Naive thymus-derived CD4-positive, alpha-beta T cell (primary cell): ENCODE measurements at regions of chr14 and their contacts with region 1.

Region 1: GRCh38 chr14:31592631-31593030 is 31.4 kb downstream of the NUBPL start:
- DNase-seq: no peak
- ATAC-seq: no peak
- H3K4me3 ChIP-seq: no peak overlapping the region
- H3K4me3 Mint-ChIP-seq: no peak overlapping the region
- H3K27ac ChIP-seq: no peak overlapping the region
- H3K27ac Mint-ChIP-seq: no peak overlapping the region
- H3K4me1 ChIP-seq: no peaks in the 10 kb centered on the region
- H3K4me1 Mint-ChIP-seq: peaks cover 0 to 12% (median 3%) of the 10 kb centered on the region in 7 donors
- H3K27me3 ChIP-seq: no peaks in the 10 kb centered on the region
- H3K27me3 Mint-ChIP-seq: no peaks in the 10 kb centered on the region

Region 2: DNA sequence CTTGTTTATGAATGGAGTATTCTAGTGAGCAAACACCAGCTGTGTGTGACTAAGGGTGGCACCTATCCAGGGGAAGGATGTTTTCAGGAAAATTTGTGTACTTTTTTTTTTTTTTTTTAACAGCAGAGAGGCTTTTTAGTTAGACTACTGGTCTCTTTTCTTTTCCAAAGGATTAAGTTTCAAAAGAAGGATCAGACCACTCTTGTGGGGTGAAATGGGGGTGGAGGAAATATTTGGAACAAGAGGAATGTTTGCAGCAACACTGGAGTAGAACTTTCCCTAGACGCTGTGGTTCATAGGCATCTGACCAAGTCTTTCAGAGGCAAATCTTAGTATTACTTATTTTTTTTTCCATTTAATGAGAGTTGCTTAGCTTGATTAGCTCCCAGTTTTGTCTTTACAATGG is 10.3 kb before region 1 on chr14:
- CTCF ChIA-PET with region 1: no interaction called
- POLR2A ChIA-PET with region 1: no interaction called
- intact Hi-C with region 1: loop called in 1 of 2 experiments (anchors 1 kb)
- DNase-seq: no peak
- ATAC-seq: no peak
- H3K4me3 ChIP-seq: no peak overlapping the region
- H3K4me3 Mint-ChIP-seq: no peak overlapping the region
- H3K27ac ChIP-seq: no peak overlapping the region
- H3K27ac Mint-ChIP-seq: no peak overlapping the region
- H3K4me1 ChIP-seq: no peaks in the 10 kb centered on the region
- H3K4me1 Mint-ChIP-seq: peaks cover 2 to 21% (median 6%) of the 10 kb centered on the region in 7 donors
- H3K27me3 ChIP-seq: no peaks in the 10 kb centered on the region
- H3K27me3 Mint-ChIP-seq: no peaks in the 10 kb centered on the region

Region 3: DNA sequence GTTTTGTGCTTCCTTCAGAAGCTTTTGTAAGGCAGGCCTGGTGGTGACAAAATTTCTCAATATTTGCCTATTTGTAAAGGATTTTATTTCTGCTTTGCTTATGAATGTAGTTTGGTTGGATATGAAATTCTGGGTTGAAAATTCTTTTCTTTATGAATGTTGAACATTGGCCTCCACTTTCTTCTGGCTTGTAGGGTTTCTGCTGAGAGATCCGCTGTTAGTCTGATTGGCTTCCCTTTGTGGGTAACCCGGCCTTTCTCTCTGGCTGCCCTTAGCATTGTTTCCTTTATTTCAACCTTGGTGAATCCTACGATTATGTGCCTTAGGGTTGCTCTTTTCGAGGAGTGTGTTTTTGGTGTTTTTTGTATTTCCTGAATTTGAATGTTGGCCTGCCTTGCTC is 26.8 kb after region 1 on chr14:
- CTCF ChIA-PET with region 1: no interaction called
- POLR2A ChIA-PET with region 1: no interaction called
- intact Hi-C with region 1: no loop called
- DNase-seq: no peak
- ATAC-seq: no peak
- H3K4me3 ChIP-seq: no peak overlapping the region
- H3K4me3 Mint-ChIP-seq: peak overlapping the region in 1 of 10 donors; percentile 18
- H3K27ac ChIP-seq: no peak overlapping the region
- H3K27ac Mint-ChIP-seq: no peak overlapping the region
- H3K4me1 ChIP-seq: no peaks in the 10 kb centered on the region
- H3K4me1 Mint-ChIP-seq: peaks cover 0 to 12% (median 0%) of the 10 kb centered on the region in 7 donors
- H3K27me3 ChIP-seq: no peaks in the 10 kb centered on the region
- H3K27me3 Mint-ChIP-seq: no peaks in the 10 kb centered on the region